Activated B cell treated with CpG ODN at 0.5 μM for 24 hours (primary cell): ENCODE measurements at regions of chr1 and their contacts with region 1.

Region 1: DNA sequence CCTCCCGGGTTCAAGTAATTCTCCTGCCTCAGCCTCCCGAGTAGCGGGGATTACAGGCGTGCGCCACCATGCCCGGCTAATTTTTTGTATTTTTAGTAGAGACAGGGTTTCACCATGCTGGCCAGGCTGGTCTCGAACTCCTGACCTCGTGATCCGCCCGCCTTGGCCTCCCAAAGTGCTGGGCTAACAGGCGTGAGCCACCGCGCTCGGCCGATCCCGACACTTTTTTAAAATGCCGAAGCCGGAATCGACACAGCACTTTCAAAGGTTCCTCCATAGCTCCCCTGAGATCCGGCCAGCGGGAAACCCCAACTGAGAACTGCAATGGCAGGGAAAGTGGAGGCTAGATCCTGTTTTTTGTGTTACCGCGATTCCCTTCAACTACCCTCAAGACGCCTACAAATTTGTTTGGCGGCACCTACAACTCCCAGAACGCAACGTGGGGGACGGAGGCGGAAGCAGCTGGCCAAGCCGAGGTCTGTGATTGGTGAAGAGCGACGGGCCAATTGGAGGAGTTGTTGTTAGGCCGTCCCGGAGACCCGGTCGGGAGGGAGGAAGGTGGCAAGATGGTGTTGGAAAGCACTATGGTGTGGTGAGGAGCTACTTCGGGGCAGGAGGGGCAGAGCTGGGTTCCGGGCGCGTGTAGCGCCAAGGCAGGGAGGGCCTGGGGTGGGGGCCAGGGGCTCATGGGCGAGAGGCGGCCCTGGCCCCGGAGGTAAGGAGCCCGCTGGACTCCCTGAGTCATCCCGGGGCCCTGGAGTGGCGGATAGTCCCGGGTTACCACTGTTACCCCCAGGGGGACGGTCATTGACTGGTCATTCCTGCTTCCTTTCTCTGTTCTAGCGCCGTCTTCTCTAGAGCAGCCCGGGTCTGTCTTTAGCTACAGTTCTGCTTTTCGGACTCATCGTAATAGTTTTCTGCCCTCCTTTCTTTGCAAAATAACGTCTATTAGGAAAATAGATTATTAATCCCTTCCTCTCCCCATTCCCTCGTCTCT is at the start of gene PSMD4:
- DNase-seq: peak; percentile 77
- ATAC-seq: peak; percentile 87
- H3K4me3 Mint-ChIP-seq: peak within 1 kb of the TSS; percentile 97
- H3K27ac Mint-ChIP-seq: peak within 1 kb of the TSS; percentile 93
- H3K4me1 Mint-ChIP-seq: peaks cover 37% of the 10 kb centered on the region
- H3K27me3 Mint-ChIP-seq: no peaks in the 10 kb centered on the region
- CTCF ChIP-seq: no peak
- total RNA-seq, gene PSMD4: 189 and 201 TPM in 2 replicates

Region 2: GRCh38 chr1:151024540-151025146 is 229.9 kb before region 1 on chr1:
- CTCF ChIA-PET with region 1: interaction called, 5 read pairs
- POLR2A ChIA-PET with region 1: interaction called, 5 read pairs
- intact Hi-C with region 1: loop called (anchors 1 kb)
- DNase-seq: peak; percentile 55
- ATAC-seq: peak; percentile 99
- H3K4me3 Mint-ChIP-seq: no peak overlapping the region
- H3K27ac Mint-ChIP-seq: no peak overlapping the region
- H3K4me1 Mint-ChIP-seq: peaks cover 6% of the 10 kb centered on the region
- H3K27me3 Mint-ChIP-seq: no peaks in the 10 kb centered on the region
- CTCF ChIP-seq: no peak

Region 3: DNA sequence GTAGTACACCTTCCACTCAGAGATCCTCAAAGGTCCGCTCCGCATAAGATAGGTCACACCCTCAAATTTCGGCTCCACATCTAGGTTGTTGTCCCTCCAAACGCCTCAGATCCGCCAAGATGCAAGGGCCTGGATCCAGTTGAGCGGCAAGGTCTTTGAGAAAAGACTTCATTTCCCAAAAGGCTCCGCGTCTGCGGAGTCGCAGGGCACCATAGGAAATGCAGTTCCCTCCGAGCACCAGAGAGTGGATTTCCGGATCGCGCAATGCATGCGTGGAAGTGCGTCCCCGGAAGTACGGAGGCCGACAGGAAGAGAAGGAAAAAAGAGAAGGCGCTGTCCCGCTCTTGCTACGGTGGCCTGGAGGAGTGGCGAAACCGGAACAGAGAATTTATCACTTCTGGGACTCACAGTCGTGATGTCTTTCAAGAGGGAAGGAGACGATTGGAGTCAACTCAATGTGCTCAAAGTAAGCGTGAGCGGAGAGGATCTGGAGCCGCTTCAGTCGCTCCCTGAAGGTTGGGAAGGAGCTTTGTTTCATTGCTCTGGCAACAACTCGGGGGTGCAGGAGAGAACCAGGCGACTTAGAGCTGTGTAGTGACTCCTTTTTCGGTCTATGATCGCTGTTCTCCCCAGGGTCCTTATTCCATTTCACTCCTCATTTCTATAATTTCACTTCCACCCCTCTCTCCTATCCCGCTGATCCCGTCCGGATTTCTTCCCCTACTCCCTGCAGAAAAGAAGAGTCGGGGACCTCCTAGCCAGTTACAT is 88.6 kb before region 1 on chr1 and contains the starts of genes LYSMD1 and SCNM1:
- CTCF ChIA-PET with region 1: no interaction called
- POLR2A ChIA-PET with region 1: interaction called, 12 read pairs
- intact Hi-C with region 1: loop called (anchors 1 kb)
- DNase-seq: peak; percentile 87
- ATAC-seq: peak; percentile 96
- H3K4me3 Mint-ChIP-seq: peak within 1 kb of the TSS; percentile 92
- H3K27ac Mint-ChIP-seq: peak within 1 kb of the TSS; percentile 89
- H3K4me1 Mint-ChIP-seq: peaks cover 37% of the 10 kb centered on the region
- H3K27me3 Mint-ChIP-seq: no peaks in the 10 kb centered on the region
- CTCF ChIP-seq: no peak
- total RNA-seq, gene LYSMD1: 4.9 and 5.4 TPM in 2 replicates
- total RNA-seq, gene SCNM1: 52.8 and 58.2 TPM in 2 replicates

Region 4: GRCh38 chr1:151242435-151242834 is 12.1 kb before region 1 on chr1:
- CTCF ChIA-PET with region 1: interaction called, 3 read pairs
- POLR2A ChIA-PET with region 1: interaction called, 10 read pairs
- intact Hi-C with region 1: no loop called
- DNase-seq: no peak
- ATAC-seq: no peak
- H3K4me3 Mint-ChIP-seq: no peak overlapping the region
- H3K27ac Mint-ChIP-seq: no peak overlapping the region
- H3K4me1 Mint-ChIP-seq: peaks cover 9% of the 10 kb centered on the region
- H3K27me3 Mint-ChIP-seq: no peaks in the 10 kb centered on the region
- CTCF ChIP-seq: no peak

Region 5: GRCh38 chr1:151327223-151327902 is 72.8 kb after region 1 on chr1 and contains the start of gene PI4KB:
- CTCF ChIA-PET with region 1: no interaction called
- POLR2A ChIA-PET with region 1: interaction called, 11 read pairs
- intact Hi-C with region 1: no loop called
- DNase-seq: peak; percentile 76
- ATAC-seq: peak; percentile 92
- H3K4me3 Mint-ChIP-seq: peak within 1 kb of the TSS; percentile 97
- H3K27ac Mint-ChIP-seq: peak within 1 kb of the TSS; percentile 99
- H3K4me1 Mint-ChIP-seq: peaks cover 42% of the 10 kb centered on the region
- H3K27me3 Mint-ChIP-seq: no peaks in the 10 kb centered on the region
- CTCF ChIP-seq: no peak
- total RNA-seq, gene PI4KB: 112 and 113 TPM in 2 replicates

Region 6: DNA sequence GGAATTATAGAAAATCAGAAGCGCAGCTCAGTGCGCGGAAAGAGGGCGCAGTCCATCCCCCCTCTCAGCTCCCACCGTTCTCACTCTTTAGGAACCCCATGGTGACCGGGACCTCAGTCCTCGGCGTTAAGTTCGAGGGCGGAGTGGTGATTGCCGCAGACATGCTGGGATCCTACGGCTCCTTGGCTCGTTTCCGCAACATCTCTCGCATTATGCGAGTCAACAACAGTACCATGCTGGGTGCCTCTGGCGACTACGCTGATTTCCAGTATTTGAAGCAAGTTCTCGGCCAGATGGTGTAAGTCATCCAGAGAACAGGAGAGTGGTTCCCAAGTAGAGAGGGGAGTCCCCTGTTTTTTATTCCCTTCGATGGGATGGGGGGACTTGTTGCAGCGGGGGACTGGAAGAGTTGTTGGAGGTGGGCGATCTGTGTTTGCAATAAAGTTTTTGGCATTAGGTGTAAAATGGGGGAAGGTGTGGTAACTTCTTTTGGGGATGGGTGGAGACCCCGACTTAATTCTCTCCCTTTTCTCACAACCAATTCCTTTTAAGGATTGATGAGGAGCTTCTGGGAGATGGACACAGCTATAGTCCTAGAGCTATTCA is 145.5 kb after region 1 on chr1:
- CTCF ChIA-PET with region 1: no interaction called
- POLR2A ChIA-PET with region 1: interaction called, 8 read pairs
- intact Hi-C with region 1: loop called (anchors 1 kb)
- DNase-seq: no peak
- ATAC-seq: peak; percentile 3
- H3K4me3 Mint-ChIP-seq: peak overlapping the region; percentile 89
- H3K27ac Mint-ChIP-seq: peak overlapping the region; percentile 98
- H3K4me1 Mint-ChIP-seq: peaks cover 31% of the 10 kb centered on the region
- H3K27me3 Mint-ChIP-seq: no peaks in the 10 kb centered on the region
- CTCF ChIP-seq: no peak

Region 7: DNA sequence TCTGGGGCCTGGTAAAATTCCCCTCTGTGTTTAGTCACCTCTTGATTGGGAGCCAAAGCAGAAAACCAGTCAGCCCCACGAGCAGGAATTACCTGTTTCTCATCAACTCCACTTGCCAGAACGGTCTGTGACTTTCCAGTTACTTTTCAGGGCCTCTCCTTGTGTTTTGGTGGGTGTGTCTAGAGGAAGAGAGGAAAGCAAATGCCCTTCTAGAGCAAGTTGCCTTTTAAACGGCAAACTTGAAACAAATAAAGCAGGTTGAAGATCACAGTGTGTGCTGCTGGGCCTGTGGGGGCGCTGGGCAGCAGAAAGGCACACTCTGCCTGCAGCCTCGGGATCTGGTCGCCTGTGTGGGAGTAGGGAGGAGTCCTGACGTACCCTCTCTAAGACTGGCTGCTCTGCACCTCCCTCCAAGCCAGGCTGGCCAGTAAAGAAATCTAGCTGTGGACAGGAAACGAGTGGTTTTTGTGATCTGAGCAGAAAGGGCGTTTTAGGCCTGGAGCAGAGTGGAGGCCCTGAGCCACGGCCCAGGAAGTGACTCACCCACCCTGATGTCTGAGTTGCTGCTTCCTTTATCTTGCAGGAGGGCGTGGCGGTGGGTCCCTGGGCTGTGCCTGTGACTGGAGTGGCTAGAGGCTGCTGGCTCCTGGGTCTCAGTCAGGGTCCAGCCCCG is 793.4 kb after region 1 on chr1:
- CTCF ChIA-PET with region 1: no interaction called
- POLR2A ChIA-PET with region 1: no interaction called
- intact Hi-C with region 1: no loop called
- DNase-seq: peak; percentile 72
- ATAC-seq: peak; percentile 94
- H3K4me3 Mint-ChIP-seq: peak overlapping the region; percentile 73
- H3K27ac Mint-ChIP-seq: peak overlapping the region; percentile 98
- H3K4me1 Mint-ChIP-seq: peaks cover 17% of the 10 kb centered on the region
- H3K27me3 Mint-ChIP-seq: peaks cover 2% of the 10 kb centered on the region
- CTCF ChIP-seq: no peak